ENCODE measurements at regions of chr2 and their contacts with region 1.

Region 1: DNA sequence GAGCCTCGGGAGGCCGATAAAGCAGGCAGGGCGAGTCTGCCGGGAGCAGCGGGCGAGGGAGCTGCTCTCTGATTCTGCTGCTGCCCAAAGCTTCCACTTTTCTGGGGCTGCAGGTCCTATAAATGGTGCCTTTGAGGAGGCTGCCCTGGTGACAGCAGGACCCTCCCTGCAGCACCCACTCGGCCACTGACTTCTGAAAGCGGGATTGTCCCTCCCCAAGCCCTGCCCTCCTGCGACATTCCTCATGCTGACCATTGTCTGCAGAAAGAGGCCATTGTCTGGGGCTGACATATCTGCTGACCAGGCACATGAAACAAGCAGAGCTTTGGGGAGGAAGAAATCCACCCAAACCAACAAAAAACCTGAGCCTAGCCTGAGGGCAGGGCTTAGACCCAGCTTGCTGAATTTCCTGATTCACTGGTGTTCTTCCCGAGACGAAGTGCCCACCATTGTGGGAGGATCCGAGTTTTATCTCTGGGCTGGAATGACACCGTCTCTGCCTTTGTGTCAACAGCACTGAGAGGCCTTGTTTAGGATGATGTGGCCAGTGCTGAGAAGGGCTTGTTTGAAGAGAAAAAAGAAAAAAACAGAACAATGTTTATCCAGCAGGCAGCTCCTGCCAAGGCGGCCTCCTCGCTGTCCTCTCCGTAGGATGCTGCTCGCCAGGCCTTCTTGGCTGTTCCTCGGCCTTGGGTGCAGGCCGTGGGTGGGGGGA is 129.7 kb downstream of the MYCN start:
- DNase-seq: peak; percentile 48
- H3K4me3 Mint-ChIP-seq: peak overlapping the region; percentile 37
- H3K27ac Mint-ChIP-seq: no peak overlapping the region
- H3K4me1 Mint-ChIP-seq: no peaks in the 10 kb centered on the region
- H3K27me3 Mint-ChIP-seq: no peaks in the 10 kb centered on the region
- CTCF ChIP-seq: no peak

Region 2: GRCh38 chr2:16031848-16032159 is 38.3 kb before region 1 on chr2:
- CTCF ChIA-PET with region 1: interaction called, 10 read pairs
- intact Hi-C with region 1: no loop called
- DNase-seq: peak; percentile 57
- H3K4me3 Mint-ChIP-seq: no peak overlapping the region
- H3K27ac Mint-ChIP-seq: no peak overlapping the region
- H3K4me1 Mint-ChIP-seq: peaks cover 18% of the 10 kb centered on the region
- H3K27me3 Mint-ChIP-seq: no peaks in the 10 kb centered on the region
- CTCF ChIP-seq: no peak